ENCODE measurements at regions of chr2 and their contacts with region 1.

Region 1: GRCh38 chr2:27683390-27684071 is 19.8 kb downstream of the SLC4A1AP start:
- DNase-seq: peak; percentile 93
- ATAC-seq: peak; percentile 73
- H3K4me3 Mint-ChIP-seq: no peak overlapping the region
- H3K27ac Mint-ChIP-seq: peak overlapping the region; percentile 92
- H3K4me1 Mint-ChIP-seq: peaks cover 31% of the 10 kb centered on the region
- H3K27me3 Mint-ChIP-seq: no peaks in the 10 kb centered on the region

Region 2: GRCh38 chr2:27303093-27304025 is 380.2 kb before region 1 on chr2:
- CTCF ChIA-PET with region 1: interaction called, 11 read pairs
- POLR2A ChIA-PET with region 1: no interaction called
- intact Hi-C with region 1: no loop called
- DNase-seq: peak; percentile 67
- ATAC-seq: peak; percentile 78
- H3K4me3 Mint-ChIP-seq: peak overlapping the region; percentile 56
- H3K27ac Mint-ChIP-seq: peak overlapping the region; percentile 24
- H3K4me1 Mint-ChIP-seq: peaks cover 5% of the 10 kb centered on the region
- H3K27me3 Mint-ChIP-seq: peaks cover 10% of the 10 kb centered on the region

Region 3: DNA sequence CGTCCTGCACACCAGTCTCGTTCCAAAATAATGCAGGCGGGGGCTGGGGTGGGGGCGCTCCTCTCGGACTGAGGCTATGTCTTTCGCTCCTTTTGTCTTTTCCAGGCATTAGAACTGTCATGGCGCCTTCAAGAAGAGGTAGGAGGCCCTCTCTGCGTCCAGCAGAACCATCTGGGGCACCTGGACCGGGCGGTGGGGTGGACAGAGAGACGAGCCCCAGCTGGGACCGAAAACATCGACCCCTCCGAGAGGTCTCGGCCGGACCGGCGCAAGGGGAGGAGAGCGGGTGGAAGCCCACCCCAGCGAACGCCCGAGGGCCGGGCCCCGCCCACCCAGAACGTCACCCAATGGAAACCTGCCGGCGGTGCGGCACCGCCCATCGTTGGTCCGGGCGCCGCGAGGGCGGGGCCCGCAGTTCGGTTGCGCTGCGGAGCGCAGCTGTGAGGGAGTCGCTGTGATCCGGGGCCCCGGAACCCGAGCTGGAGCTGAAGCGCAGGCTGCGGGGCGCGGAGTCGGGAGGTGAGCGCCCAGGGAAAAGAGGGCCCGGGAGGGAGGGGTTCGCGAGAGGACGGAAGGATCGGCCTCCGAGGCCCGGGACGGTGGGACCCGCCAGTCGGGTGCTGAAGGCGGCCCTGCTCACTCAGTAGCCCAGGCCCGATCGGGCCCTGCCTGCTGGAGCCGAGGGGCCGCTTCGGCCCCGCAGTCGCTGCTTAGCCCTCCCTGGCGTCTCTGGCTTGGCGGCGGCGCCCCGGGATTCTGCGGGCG is 255.1 kb before region 1 on chr2 and contains the start of gene NRBP1:
- CTCF ChIA-PET with region 1: interaction called, 21 read pairs
- POLR2A ChIA-PET with region 1: no interaction called
- intact Hi-C with region 1: loop called (anchors 2 kb)
- DNase-seq: peak; percentile 97
- ATAC-seq: peak; percentile 85
- H3K4me3 Mint-ChIP-seq: peak within 1 kb of the TSS; percentile 100
- H3K27ac Mint-ChIP-seq: peak within 1 kb of the TSS; percentile 98
- H3K4me1 Mint-ChIP-seq: peaks cover 37% of the 10 kb centered on the region
- H3K27me3 Mint-ChIP-seq: no peaks in the 10 kb centered on the region
- total RNA-seq, gene NRBP1: 74.3 to 74.4 TPM

Region 4: GRCh38 chr2:27582695-27583389 is 100.7 kb before region 1 on chr2 and contains the start of gene ZNF512:
- CTCF ChIA-PET with region 1: interaction called, 8 read pairs
- POLR2A ChIA-PET with region 1: no interaction called
- intact Hi-C with region 1: loop called in 1 of 2 experiments (anchors 1 kb)
- DNase-seq: peak; percentile 91
- ATAC-seq: peak; percentile 92
- H3K4me3 Mint-ChIP-seq: peak within 1 kb of the TSS; percentile 98
- H3K27ac Mint-ChIP-seq: peak within 1 kb of the TSS; percentile 98
- H3K4me1 Mint-ChIP-seq: peaks cover 47% of the 10 kb centered on the region
- H3K27me3 Mint-ChIP-seq: no peaks in the 10 kb centered on the region
- total RNA-seq, gene ZNF512: 31.8 to 34.5 TPM

Region 5: GRCh38 chr2:27655155-27655951 is 28.2 kb before region 1 on chr2:
- CTCF ChIA-PET with region 1: interaction called, 12 read pairs
- POLR2A ChIA-PET with region 1: interaction called, 4 read pairs
- intact Hi-C with region 1: no loop called
- DNase-seq: no peak
- ATAC-seq: no peak
- H3K4me3 Mint-ChIP-seq: no peak overlapping the region
- H3K27ac Mint-ChIP-seq: peak overlapping the region; percentile 22
- H3K4me1 Mint-ChIP-seq: peaks cover 25% of the 10 kb centered on the region
- H3K27me3 Mint-ChIP-seq: no peaks in the 10 kb centered on the region

Region 6: GRCh38 chr2:27703638-27704341 is 20.3 kb after region 1 on chr2:
- CTCF ChIA-PET with region 1: interaction called, 13 read pairs
- POLR2A ChIA-PET with region 1: interaction called, 4 read pairs
- intact Hi-C with region 1: no loop called
- DNase-seq: peak; percentile 92
- ATAC-seq: peak; percentile 78
- H3K4me3 Mint-ChIP-seq: no peak overlapping the region
- H3K27ac Mint-ChIP-seq: peak overlapping the region; percentile 7
- H3K4me1 Mint-ChIP-seq: peaks cover 21% of the 10 kb centered on the region
- H3K27me3 Mint-ChIP-seq: no peaks in the 10 kb centered on the region

Measured in activated CD4-positive, alpha-beta T cell treated with anti-CD3 and anti-CD28 coated beads for 36 hours (primary cell).